Colonic mucosa (tissue), 4 donors: ENCODE measurements at regions of chr10 and their contacts with region 1.

Region 1: GRCh38 chr10:95246579-95247051 is 44.2 kb downstream of the PDLIM1 start:
- DNase-seq: peak; percentile 79
- H3K4me3 ChIP-seq: no peak overlapping the region
- H3K27ac ChIP-seq: no peak overlapping the region
- H3K4me1 ChIP-seq: no peaks in the 10 kb centered on the region
- H3K27me3 ChIP-seq: no peaks in the 10 kb centered on the region
- CTCF ChIP-seq: peak; percentile 81

Region 2: GRCh38 chr10:95183271-95184230 is 63.1 kb before region 1 on chr10:
- intact Hi-C with region 1: loop called (anchors 5 kb)
- DNase-seq: peak; percentile 93
- H3K4me3 ChIP-seq: peak overlapping the region; percentile 56
- H3K27ac ChIP-seq: peak overlapping the region; percentile 66
- H3K4me1 ChIP-seq: no peaks in the 10 kb centered on the region
- H3K27me3 ChIP-seq: no peaks in the 10 kb centered on the region
- CTCF ChIP-seq: peak; percentile 90